IMR-90 (cell line): ENCODE measurements at regions of chr2 and their contacts with region 1.

Region 1: DNA sequence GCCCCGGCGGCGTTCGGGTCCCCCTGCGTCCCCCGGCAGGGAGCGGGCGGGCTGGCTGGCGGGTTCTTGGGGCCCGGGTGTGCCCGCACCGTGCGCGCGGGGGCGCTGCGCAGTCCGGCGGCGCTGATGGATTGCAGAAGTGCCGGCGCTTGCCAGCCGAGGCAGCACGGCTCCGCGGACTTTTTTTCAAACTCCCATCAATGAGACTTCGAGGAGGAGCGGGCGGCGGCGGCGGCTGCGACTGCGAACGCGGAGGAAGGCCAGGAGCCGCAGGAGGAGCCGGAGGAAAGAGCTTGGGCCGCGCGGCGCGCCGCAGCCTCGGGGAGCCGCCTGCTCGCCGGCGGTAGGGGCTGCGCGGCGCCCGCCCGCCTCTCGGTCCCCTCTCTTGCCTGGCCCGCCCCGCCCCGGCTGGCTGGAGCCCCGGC is at the start of gene GLI2:
- DNase-seq: peak; percentile 87
- ATAC-seq: peak; percentile 63
- H3K4me3 ChIP-seq: peak within 1 kb of the TSS; percentile 93
- H3K27ac ChIP-seq: peak within 1 kb of the TSS; percentile 98
- H3K4me1 ChIP-seq: peaks cover 34% of the 10 kb centered on the region
- H3K27me3 ChIP-seq: no peaks in the 10 kb centered on the region
- CTCF ChIP-seq: peak; percentile 85
- POLR2A ChIP-seq: peak; percentile 20; the same call in 1 of the 2 replicates
- RAD21 ChIP-seq: peak; percentile 65
- total RNA-seq, gene GLI2: 3.8 and 4.7 TPM in 2 replicates

Region 2: DNA sequence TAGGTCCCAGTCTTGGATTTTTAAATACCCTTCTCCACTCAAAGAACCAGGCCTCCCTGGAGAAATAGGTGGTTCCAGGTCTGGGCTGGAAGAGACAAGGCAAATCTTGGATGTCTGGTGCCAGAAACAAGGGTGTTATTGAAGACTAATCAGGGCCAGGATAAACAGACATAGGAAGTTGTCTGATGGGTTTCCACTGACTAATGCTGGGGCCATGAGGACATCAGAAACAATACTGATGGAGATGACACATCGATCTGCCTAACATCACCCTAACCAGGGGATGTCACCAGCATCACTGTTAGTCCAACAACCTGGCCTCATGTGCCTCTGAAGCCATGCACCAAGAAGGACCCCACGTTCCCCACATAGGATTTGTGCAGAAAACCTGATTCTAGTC is 42.6 kb before region 1 on chr2:
- CTCF ChIA-PET with region 1: interaction called, 4 read pairs
- POLR2A ChIA-PET with region 1: no interaction called
- dilution Hi-C with region 1: no loop called
- in situ Hi-C with region 1: no loop called
- intact Hi-C with region 1: loop called (anchors 1 kb)
- DNase-seq: peak; percentile 47
- ATAC-seq: no peak
- H3K4me3 ChIP-seq: no peak overlapping the region
- H3K27ac ChIP-seq: no peak overlapping the region
- H3K4me1 ChIP-seq: peaks cover 5% of the 10 kb centered on the region; the same call in 1 of the 2 replicates
- H3K27me3 ChIP-seq: peaks cover 7% of the 10 kb centered on the region
- CTCF ChIP-seq: no peak
- POLR2A ChIP-seq: no peak
- RAD21 ChIP-seq: no peak

Region 3: GRCh38 chr2:120820263-120820952 is 84.7 kb after region 1 on chr2:
- CTCF ChIA-PET with region 1: interaction called, 4 read pairs
- POLR2A ChIA-PET with region 1: no interaction called
- dilution Hi-C with region 1: no loop called
- in situ Hi-C with region 1: loop called (anchors 10 kb)
- intact Hi-C with region 1: loop called (anchors 2 kb)
- DNase-seq: peak; percentile 90
- ATAC-seq: peak; percentile 65
- H3K4me3 ChIP-seq: peak overlapping the region; percentile 27
- H3K27ac ChIP-seq: peak overlapping the region; percentile 89
- H3K4me1 ChIP-seq: peaks cover 40% of the 10 kb centered on the region
- H3K27me3 ChIP-seq: no peaks in the 10 kb centered on the region
- CTCF ChIP-seq: no peak
- POLR2A ChIP-seq: peak; percentile 22; the same call in 1 of the 2 replicates
- RAD21 ChIP-seq: no peak

Region 4: GRCh38 chr2:120934574-120935340 is 199.0 kb after region 1 on chr2:
- CTCF ChIA-PET with region 1: no interaction called
- POLR2A ChIA-PET with region 1: no interaction called
- dilution Hi-C with region 1: no loop called
- in situ Hi-C with region 1: no loop called
- intact Hi-C with region 1: loop called (anchors 5 kb)
- DNase-seq: peak; percentile 94
- ATAC-seq: peak; percentile 56
- H3K4me3 ChIP-seq: no peak overlapping the region
- H3K27ac ChIP-seq: peak overlapping the region; percentile 89
- H3K4me1 ChIP-seq: peaks cover 71% of the 10 kb centered on the region
- H3K27me3 ChIP-seq: no peaks in the 10 kb centered on the region
- CTCF ChIP-seq: no peak
- POLR2A ChIP-seq: peak; percentile 29; the same call in 1 of the 2 replicates
- RAD21 ChIP-seq: no peak; the same call in 1 of the 2 replicates

Region 5: DNA sequence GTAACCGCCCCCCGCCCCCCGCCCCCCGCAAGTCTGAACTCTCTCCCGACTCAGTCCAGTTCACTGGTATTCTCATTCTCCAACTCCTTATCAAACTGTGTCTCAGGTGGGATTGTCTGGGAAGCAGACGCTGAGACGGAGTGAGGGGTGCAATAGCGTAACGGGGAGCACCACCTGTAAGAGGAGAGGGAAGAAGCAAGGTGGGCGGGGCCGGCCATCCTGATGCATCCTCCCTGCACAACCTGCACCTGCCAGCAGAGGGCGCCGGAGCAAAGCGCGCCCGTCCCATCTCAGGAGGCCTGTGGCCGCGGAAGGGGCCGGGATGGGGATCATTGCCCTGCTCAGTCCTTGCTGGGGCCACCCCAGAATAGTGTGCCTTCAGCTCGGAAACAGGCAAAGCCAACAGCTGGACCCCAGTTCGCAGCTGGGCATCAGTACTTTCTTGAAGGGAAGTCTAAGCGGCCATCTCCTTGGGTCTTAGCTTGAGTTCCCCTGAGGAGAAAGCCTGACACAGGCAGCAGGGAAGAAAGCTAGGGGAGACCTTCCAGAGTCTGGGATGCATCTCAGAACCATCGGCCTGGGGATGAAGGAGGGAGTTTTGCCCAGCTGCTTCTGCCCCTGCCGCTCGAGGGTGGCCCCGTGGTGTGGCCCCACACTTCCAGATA is 341.3 kb after region 1 on chr2:
- CTCF ChIA-PET with region 1: interaction called, 3 read pairs
- POLR2A ChIA-PET with region 1: no interaction called
- dilution Hi-C with region 1: no loop called
- in situ Hi-C with region 1: no loop called
- intact Hi-C with region 1: loop called (anchors 1 kb)
- DNase-seq: peak; percentile 28
- ATAC-seq: peak; percentile 59
- H3K4me3 ChIP-seq: no peak overlapping the region
- H3K27ac ChIP-seq: no peak overlapping the region
- H3K4me1 ChIP-seq: no peaks in the 10 kb centered on the region; the same call in 1 of the 2 replicates
- H3K27me3 ChIP-seq: peaks cover 17% of the 10 kb centered on the region; the same call in 1 of the 2 replicates
- CTCF ChIP-seq: peak; percentile 71
- POLR2A ChIP-seq: no peak
- RAD21 ChIP-seq: 0 out of 2 replicates have a peak, but pooled peaks have one; percentile 18